ENCODE measurements at regions of chr14 and their contacts with region 1.

Region 1: DNA sequence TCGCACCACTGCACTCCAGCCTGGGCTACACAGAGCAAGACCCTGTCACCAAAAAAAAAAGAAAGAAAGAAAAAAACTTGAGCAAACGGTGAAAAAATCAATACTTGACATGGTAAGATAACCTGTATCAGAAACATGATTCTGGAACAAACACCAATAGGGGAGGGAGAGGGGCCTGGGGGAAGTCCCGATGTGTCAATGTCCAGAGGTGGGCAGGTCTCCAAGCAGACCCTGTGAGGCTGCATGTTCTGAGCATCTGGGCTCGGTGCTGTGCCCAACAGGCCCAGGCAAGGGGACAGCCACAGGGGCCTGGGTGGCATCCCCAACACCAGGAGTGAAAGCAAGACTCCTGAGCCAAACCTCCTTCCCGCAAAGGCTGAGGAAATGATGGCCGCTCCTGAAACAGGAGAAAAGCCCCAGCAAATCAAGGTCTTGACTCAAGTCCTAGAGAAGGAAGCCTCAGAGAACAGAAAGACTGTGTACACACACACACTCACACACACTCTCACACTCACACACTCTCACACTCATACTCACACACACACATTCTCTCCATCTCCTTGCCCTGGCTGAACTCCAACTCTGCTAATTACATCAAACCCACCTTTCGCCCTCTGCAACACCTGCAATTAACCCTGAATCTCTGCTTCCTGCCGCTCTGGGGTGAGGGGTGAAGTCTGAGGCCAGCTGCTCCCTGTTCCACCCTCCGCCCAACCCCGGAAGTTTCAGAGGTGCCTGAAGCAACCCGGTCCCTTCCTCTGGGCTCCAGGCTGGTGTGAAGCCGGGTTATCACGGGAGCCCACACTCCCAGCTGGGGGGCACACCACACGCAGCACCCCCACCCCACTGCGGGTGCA is 20.4 kb downstream of the CCDC88C start:
- DNase-seq: peak; percentile 64 to 85 (median 72)
- H3K4me3 ChIP-seq: peak overlapping the region; percentile 49 to 61
- H3K4me3 Mint-ChIP-seq: peak overlapping the region; percentile 79 to 99 (median 82)
- H3K27ac ChIP-seq: peak overlapping the region; percentile 65
- H3K27ac Mint-ChIP-seq: peak overlapping the region; percentile 90 to 98 (median 95)
- H3K4me1 ChIP-seq: peaks cover 97% of the 10 kb centered on the region
- H3K4me1 Mint-ChIP-seq: peaks cover 70 to 98% (median 84%) of the 10 kb centered on the region in 4 donors
- H3K27me3 ChIP-seq: no peaks in the 10 kb centered on the region
- H3K27me3 Mint-ChIP-seq: no peaks in the 10 kb centered on the region

Region 2: GRCh38 chr14:91317381-91318308 is 79.5 kb before region 1 on chr14:
- CTCF ChIA-PET with region 1: interaction called, 38 read pairs
- POLR2A ChIA-PET with region 1: interaction called, 11 read pairs
- intact Hi-C with region 1: no loop called
- DNase-seq: peak; percentile 84 to 87 (median 85)
- H3K4me3 ChIP-seq: peak overlapping the region; percentile 17 to 29
- H3K4me3 Mint-ChIP-seq: peak overlapping the region; percentile 76 to 90 (median 84)
- H3K27ac ChIP-seq: peak overlapping the region; percentile 75
- H3K27ac Mint-ChIP-seq: peak overlapping the region; percentile 98 to 100 (median 99)
- H3K4me1 ChIP-seq: peaks cover 98% of the 10 kb centered on the region
- H3K4me1 Mint-ChIP-seq: peaks cover 45 to 88% (median 68%) of the 10 kb centered on the region in 4 donors
- H3K27me3 ChIP-seq: no peaks in the 10 kb centered on the region
- H3K27me3 Mint-ChIP-seq: no peaks in the 10 kb centered on the region

Region 3: DNA sequence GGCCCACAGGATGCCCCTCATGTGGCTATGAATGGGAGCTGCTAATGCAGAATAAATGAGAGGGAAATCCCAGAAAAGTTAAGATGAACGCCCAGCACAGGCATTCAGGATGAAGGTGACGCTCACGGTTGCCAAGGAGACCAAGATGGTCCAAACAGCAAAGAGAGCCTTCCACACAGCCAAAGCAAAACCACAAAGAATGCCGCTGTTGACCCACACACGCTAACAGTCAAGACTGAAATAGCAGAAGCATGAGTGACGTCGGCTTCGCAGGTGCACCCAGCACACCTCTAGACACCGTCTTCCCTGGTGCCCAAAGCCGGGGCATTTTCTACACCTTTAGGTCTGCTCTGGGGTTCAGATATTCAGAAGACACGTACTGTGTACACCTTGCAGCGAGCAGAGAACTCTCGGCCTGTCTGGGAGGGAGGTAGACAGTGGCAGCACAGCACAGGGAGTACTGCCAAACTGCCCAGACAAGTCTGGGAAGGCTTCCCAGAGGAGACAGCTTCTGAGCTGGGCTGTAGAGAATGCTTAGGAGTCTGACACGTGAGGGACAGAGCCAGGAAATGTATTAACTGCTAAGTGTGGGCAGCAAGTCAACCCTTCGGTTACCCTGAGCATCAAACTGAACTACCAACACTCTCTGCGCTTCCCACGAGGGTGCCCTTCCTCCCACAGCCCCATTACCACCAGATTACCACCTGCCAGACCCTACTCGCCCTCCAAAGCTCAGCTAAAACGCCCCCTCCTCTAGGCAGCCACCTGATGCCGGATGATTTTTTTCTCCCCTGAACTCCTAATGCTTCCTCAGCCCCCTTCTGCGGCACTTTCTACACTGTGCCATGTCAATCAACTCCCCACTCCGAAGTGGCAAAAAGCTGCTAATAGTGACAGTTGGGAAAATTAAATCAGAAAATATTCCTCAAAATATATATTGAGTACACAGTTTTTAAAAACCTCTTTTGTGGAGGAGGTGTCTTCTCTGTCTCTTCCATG is 29.7 kb before region 1 on chr14:
- CTCF ChIA-PET with region 1: interaction called, 23 read pairs
- POLR2A ChIA-PET with region 1: interaction called, 177 read pairs
- intact Hi-C with region 1: loop called (anchors 2 kb)
- DNase-seq: peak; percentile 68 to 97 (median 75)
- H3K4me3 ChIP-seq: peak overlapping the region; percentile 8 to 50
- H3K4me3 Mint-ChIP-seq: peak overlapping the region; percentile 58 to 89 (median 82)
- H3K27ac ChIP-seq: peak overlapping the region; percentile 85
- H3K27ac Mint-ChIP-seq: peak overlapping the region; percentile 94 to 99 (median 97)
- H3K4me1 ChIP-seq: peaks cover 98% of the 10 kb centered on the region
- H3K4me1 Mint-ChIP-seq: peaks cover 63 to 93% (median 76%) of the 10 kb centered on the region in 4 donors
- H3K27me3 ChIP-seq: no peaks in the 10 kb centered on the region
- H3K27me3 Mint-ChIP-seq: no peaks in the 10 kb centered on the region

Region 4: DNA sequence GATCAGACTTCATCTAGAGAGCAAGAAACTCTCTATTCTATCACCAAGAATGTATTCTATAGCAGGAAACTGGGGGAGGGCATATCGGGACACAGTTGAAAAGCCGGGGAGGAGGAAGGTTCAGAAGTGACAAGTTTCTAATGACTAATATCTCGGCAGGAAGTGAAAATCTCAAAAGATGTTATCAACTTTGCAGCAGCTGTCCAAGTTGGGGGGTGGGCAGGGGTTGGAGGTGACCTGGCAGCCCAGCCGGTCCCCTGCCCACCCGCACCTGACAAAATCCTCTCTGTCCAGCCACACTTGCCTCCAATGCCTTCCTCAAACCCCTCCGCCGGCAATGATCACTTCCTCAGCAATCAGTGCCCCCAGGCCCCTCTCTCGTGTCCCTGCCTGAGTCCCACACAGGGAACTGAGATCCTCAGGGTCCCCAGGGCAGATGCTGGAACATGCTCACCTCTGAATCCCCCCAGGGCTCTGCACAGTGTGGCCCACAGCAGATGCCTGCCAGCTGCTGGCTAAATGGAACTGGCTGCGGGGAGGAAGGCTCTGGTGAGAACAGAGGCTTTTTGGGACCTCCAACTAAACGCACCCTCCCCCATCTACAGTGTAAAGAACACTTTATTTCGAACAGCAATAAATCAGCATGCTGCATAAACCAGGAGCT is 23.5 kb before region 1 on chr14:
- CTCF ChIA-PET with region 1: interaction called, 23 read pairs
- POLR2A ChIA-PET with region 1: interaction called, 177 read pairs
- intact Hi-C with region 1: loop called (anchors 1 kb)
- DNase-seq: peak; percentile 54 to 89 (median 60)
- H3K4me3 ChIP-seq: peak overlapping the region; percentile 46 to 50
- H3K4me3 Mint-ChIP-seq: peak overlapping the region; percentile 78 to 94 (median 84)
- H3K27ac ChIP-seq: peak overlapping the region; percentile 79
- H3K27ac Mint-ChIP-seq: peak overlapping the region; percentile 93 to 98 (median 96)
- H3K4me1 ChIP-seq: peaks cover 99% of the 10 kb centered on the region
- H3K4me1 Mint-ChIP-seq: peaks cover 78 to 100% (median 90%) of the 10 kb centered on the region in 4 donors
- H3K27me3 ChIP-seq: no peaks in the 10 kb centered on the region
- H3K27me3 Mint-ChIP-seq: no peaks in the 10 kb centered on the region

Measured in CD4-positive, alpha-beta memory T cell (primary cell).